ENCODE measurements at regions of chr12 and their contacts with region 1.

Region 1: GRCh38 chr12:113174461-113175384 is 10.6 kb downstream of the DDX54 start:
- DNase-seq: no peak
- H3K4me3 ChIP-seq: no peak overlapping the region
- H3K27me3 ChIP-seq: no peaks in the 10 kb centered on the region
- CTCF ChIP-seq: peak; percentile 99

Region 2: GRCh38 chr12:113048716-113049127 is 126.0 kb before region 1 on chr12:
- CTCF ChIA-PET with region 1: interaction called, 65 read pairs
- POLR2A ChIA-PET with region 1: no interaction called
- DNase-seq: no peak
- H3K4me3 ChIP-seq: no peak overlapping the region
- H3K27me3 ChIP-seq: no peaks in the 10 kb centered on the region; the same call in 1 of the 2 replicates
- CTCF ChIP-seq: peak; percentile 80

Region 3: DNA sequence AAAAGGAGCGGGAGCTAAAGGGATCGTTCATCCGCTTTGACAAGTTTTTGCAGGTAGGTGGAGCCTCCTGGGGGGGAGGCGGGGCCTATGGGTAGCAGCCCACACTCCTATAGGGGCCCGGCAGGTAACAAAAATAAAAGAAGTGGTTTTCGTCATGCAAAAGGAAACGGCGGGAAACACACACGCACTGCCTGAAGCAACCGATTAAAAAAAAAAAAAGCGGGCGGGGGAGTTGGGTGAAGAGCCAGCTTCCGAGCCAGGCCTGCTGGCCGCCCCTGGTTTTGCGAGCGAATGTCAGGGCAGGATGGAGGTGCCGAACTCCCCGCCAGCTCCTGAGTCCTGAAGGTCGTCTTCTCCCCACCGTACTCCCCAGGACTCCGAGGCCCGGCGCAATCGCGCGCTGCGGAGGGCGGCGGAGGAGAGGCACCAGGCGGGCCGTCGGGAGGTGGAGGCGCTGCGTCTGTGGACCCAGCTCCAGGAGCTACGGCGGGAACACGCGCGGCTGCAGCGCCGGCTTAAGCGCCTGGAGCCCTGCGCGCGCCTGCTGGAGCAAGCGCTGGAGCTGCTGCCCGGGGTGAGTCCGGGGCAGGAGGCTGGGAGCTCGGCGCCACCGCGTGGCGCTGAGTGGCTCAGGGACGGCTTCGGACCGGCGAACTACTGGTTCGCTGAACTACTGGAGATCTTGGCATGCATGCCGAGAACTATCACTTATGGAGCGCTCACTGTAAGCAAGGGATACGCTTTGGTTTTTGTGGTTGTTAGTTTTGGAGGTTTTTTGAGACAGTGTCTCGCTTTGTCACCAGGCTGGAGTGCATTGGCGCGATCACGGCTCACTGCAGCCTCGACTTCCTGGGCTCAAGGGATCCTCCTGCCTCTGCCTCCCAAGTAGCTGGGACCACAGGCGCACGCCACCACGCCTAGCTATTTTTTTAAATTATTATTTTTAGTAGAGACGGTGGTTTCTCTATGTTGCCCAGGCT is 21.6 kb before region 1 on chr12:
- CTCF ChIA-PET with region 1: interaction called, 31 read pairs
- POLR2A ChIA-PET with region 1: no interaction called
- DNase-seq: peak; percentile 10
- H3K4me3 ChIP-seq: peak overlapping the region; percentile 32
- H3K27me3 ChIP-seq: peaks cover 23% of the 10 kb centered on the region
- CTCF ChIP-seq: peak; percentile 59

Region 4: GRCh38 chr12:113161414-113162016 is 13.2 kb before region 1 on chr12:
- CTCF ChIA-PET with region 1: interaction called, 31 read pairs
- POLR2A ChIA-PET with region 1: no interaction called
- DNase-seq: no peak
- H3K4me3 ChIP-seq: no peak overlapping the region
- H3K27me3 ChIP-seq: no peaks in the 10 kb centered on the region
- CTCF ChIP-seq: no peak

Region 5: DNA sequence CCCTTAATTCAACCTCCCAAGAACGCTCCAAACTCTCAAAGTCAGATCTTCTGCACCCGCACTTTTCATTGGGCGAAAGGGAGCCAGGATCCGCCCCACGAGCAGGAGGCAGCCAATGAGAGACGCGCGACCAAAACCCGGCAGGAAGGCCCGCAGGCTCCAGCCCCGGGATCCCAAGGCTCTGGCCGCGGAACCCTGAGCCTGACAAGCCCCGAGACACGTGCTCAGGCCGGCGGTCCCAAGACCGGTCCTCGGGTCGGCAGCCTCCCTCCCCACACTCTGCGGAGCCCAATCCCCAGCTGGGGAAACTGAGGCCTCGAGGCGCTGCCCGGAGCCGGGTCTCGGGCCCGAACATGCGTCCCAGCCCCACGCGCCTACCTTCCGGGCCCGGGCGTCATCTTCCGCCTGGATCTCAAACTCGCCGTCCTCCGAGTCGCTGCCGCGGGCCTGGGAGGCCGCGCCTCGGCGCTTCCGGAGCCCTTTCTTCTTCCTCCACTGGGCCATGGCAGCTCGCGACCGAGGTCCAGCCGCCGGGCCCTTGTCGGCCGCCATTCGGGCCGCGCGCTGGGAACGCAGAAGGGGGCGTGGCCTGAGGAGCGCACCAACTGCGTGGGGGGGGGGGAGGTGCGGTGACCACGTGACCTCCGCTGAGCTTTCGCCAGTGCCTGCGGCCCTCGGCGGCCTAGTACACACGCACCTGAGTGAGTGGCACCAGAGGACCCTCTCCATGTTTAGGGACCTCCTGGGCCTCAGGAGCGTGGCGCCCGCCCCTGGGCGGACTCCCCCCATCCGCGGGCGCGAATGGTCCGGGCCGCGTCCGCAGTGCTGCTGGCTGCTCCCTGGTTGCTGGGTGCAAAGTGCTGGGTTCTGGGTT is 10.4 kb after region 1 on chr12 and contains the starts of genes DDX54 and RITA1:
- CTCF ChIA-PET with region 1: interaction called, 13 read pairs
- POLR2A ChIA-PET with region 1: no interaction called
- DNase-seq: no peak
- H3K4me3 ChIP-seq: peak within 1 kb of the TSS; percentile 95
- H3K27me3 ChIP-seq: no peaks in the 10 kb centered on the region
- CTCF ChIP-seq: no peak
- polyA plus RNA-seq, gene DDX54: 36.2 and 54.7 TPM in 2 replicates
- polyA plus RNA-seq, gene RITA1: 13.2 and 19.4 TPM in 2 replicates